Head of caudate nucleus (tissue), 42 donors: ENCODE measurements at regions of chr1 and their contacts with region 1.

Region 1: GRCh38 chr1:47997289-47998200 is at the start of gene TRABD2B:
- DNase-seq: peak; percentile 20 to 92 (median 84)

Region 2: DNA sequence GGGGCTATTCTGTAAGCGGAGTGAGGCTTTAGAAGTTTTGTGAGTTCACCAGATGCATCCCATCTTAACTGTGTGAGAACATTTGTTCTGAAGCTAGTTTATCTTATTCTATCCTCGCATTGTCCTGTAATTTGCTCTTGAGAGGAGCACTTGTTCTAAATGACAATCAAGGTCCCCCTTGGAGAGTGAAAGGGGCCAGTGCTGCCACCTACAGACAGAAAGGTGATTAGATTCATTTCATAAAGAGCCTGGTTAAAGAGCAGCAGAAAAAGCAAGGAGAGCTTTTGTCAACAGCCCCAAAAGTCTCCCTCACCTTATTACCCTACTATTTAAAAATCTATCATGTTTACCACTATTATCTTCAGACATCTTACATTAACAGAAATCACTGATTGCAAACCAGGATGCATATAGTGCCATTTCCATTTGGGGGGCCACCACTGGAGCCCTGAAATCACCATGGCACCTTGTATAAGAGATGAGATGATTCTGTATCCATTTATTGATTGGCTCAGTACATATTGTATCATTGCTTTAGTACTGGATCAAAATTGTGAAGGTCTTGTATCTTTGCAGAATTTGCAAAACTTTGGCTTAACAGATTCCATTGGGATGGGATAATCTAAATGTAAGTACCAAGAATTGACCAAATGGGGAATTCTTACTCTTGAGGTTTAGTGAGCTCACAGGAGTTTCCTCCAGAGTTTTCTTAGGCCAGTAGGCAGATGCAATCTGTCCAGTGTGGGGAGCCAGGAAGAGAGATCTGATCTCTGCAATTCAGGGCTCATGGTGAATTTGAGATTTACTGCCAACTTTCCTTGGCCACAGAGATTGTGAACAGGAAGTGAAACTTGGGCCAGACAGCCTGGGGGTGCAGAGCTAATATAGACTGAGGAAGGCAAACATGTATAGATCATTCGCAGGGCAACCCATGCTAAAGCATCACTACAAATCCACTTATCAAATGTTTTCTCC is 63.9 kb after region 1 on chr1:
- intact Hi-C with region 1: loop called (anchors 2 kb)
- DNase-seq: peak; percentile 7 to 90 (median 69)